Activated B cell treated with CpG ODN at 0.5 μM for 24 hours (primary cell): ENCODE measurements at regions of chr11 and their contacts with region 1.

Region 1: GRCh38 chr11:5684646-5685362 is at the start of gene TRIM5:
- DNase-seq: peak; percentile 58
- ATAC-seq: peak; percentile 77
- H3K4me3 Mint-ChIP-seq: peak within 1 kb of the TSS; percentile 93
- H3K27ac Mint-ChIP-seq: peak within 1 kb of the TSS; percentile 93
- H3K4me1 Mint-ChIP-seq: peaks cover 54% of the 10 kb centered on the region
- H3K27me3 Mint-ChIP-seq: no peaks in the 10 kb centered on the region
- CTCF ChIP-seq: no peak
- total RNA-seq, gene TRIM5: 34.3 and 36.3 TPM in 2 replicates

Region 2: GRCh38 chr11:5600374-5600851 is 84.4 kb before region 1 on chr11:
- CTCF ChIA-PET with region 1: interaction called, 15 read pairs
- POLR2A ChIA-PET with region 1: interaction called, 4 read pairs
- intact Hi-C with region 1: loop called (anchors 1 kb)
- DNase-seq: peak; percentile 25
- ATAC-seq: peak; percentile 95
- H3K4me3 Mint-ChIP-seq: no peak overlapping the region
- H3K27ac Mint-ChIP-seq: no peak overlapping the region
- H3K4me1 Mint-ChIP-seq: peaks cover 17% of the 10 kb centered on the region
- H3K27me3 Mint-ChIP-seq: peaks cover 3% of the 10 kb centered on the region
- CTCF ChIP-seq: no peak

Region 3: GRCh38 chr11:5631969-5632635 is 52.7 kb before region 1 on chr11:
- CTCF ChIA-PET with region 1: interaction called, 3 read pairs
- POLR2A ChIA-PET with region 1: interaction called, 13 read pairs
- intact Hi-C with region 1: loop called (anchors 2 kb)
- DNase-seq: no peak
- ATAC-seq: peak; percentile 96
- H3K4me3 Mint-ChIP-seq: peak overlapping the region; percentile 69
- H3K27ac Mint-ChIP-seq: peak overlapping the region; percentile 94
- H3K4me1 Mint-ChIP-seq: peaks cover 49% of the 10 kb centered on the region
- H3K27me3 Mint-ChIP-seq: no peaks in the 10 kb centered on the region
- CTCF ChIP-seq: no peak

Region 4: GRCh38 chr11:5712507-5712906 is 27.7 kb after region 1 on chr11:
- CTCF ChIA-PET with region 1: interaction called, 52 read pairs
- POLR2A ChIA-PET with region 1: interaction called, 24 read pairs
- intact Hi-C with region 1: loop called (anchors 1 kb)
- DNase-seq: no peak
- ATAC-seq: peak; percentile 52
- H3K4me3 Mint-ChIP-seq: no peak overlapping the region
- H3K27ac Mint-ChIP-seq: no peak overlapping the region
- H3K4me1 Mint-ChIP-seq: no peaks in the 10 kb centered on the region
- H3K27me3 Mint-ChIP-seq: no peaks in the 10 kb centered on the region
- CTCF ChIP-seq: no peak

Region 5: DNA sequence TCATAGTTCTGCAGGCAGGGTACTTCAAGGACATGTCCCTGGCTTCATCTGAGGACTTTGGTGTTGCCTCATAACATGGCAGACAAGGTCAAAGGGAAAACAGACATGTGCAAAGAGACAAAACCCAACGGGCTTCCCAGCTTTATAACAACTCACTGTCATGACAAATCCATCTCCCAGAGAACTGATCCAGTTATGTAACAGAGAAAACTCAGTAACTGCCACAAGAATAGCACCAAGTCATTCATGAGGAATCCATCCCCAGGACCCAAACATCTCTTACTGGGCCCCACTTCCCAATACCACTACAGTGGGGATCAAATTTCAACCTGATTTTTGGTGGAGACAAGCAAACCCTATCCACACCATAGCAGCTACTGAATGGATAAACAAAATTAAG is 82.3 kb after region 1 on chr11:
- CTCF ChIA-PET with region 1: no interaction called
- POLR2A ChIA-PET with region 1: no interaction called
- intact Hi-C with region 1: no loop called
- DNase-seq: no peak
- ATAC-seq: no peak
- H3K4me3 Mint-ChIP-seq: no peak overlapping the region
- H3K27ac Mint-ChIP-seq: no peak overlapping the region
- H3K4me1 Mint-ChIP-seq: no peaks in the 10 kb centered on the region
- H3K27me3 Mint-ChIP-seq: no peaks in the 10 kb centered on the region
- CTCF ChIP-seq: no peak

Region 6: DNA sequence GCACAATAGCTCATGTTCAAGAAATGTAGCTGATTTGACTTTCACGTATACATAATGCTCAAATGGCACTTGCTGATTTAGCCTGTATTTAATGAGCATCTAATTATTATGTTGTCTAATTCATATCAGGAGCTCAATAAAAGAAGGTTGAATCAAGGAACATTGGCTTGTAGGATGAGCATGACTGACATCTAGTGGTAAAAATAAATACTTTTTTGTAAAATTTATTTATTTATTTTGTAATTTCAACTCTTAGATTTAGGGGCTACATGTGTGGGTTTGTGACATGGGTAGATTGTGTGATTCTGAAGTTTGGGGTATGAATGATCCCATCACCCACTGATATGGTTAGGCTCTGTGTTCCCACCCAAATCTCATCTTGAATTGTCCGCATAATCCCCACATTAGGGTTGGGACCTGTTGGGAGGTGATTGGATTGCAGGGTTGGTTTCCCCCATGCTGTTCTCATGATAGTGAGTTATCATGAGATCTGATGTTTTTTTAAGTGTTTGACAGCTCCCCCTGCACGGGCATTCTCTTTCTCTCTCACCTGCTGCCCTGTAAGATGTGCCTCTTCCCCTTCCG is 206.5 kb after region 1 on chr11:
- CTCF ChIA-PET with region 1: interaction called, 3 read pairs
- POLR2A ChIA-PET with region 1: no interaction called
- intact Hi-C with region 1: loop called (anchors 1 kb)
- DNase-seq: no peak
- ATAC-seq: no peak
- H3K4me3 Mint-ChIP-seq: no peak overlapping the region
- H3K27ac Mint-ChIP-seq: no peak overlapping the region
- H3K4me1 Mint-ChIP-seq: no peaks in the 10 kb centered on the region
- H3K27me3 Mint-ChIP-seq: no peaks in the 10 kb centered on the region
- CTCF ChIP-seq: no peak

Region 7: GRCh38 chr11:6612213-6613041 is 927.6 kb after region 1 on chr11 and contains the start of gene TAF10:
- CTCF ChIA-PET with region 1: no interaction called
- POLR2A ChIA-PET with region 1: interaction called, 4 read pairs
- intact Hi-C with region 1: loop called (anchors 5 kb)
- DNase-seq: peak; percentile 92
- ATAC-seq: peak; percentile 83
- H3K4me3 Mint-ChIP-seq: peak within 1 kb of the TSS; percentile 85
- H3K27ac Mint-ChIP-seq: peak within 1 kb of the TSS; percentile 85
- H3K4me1 Mint-ChIP-seq: peaks cover 29% of the 10 kb centered on the region
- H3K27me3 Mint-ChIP-seq: no peaks in the 10 kb centered on the region
- CTCF ChIP-seq: no peak
- total RNA-seq, gene TAF10: 149 and 154 TPM in 2 replicates